ENCODE measurements at regions of chr1 and their contacts with region 1.

Region 1: DNA sequence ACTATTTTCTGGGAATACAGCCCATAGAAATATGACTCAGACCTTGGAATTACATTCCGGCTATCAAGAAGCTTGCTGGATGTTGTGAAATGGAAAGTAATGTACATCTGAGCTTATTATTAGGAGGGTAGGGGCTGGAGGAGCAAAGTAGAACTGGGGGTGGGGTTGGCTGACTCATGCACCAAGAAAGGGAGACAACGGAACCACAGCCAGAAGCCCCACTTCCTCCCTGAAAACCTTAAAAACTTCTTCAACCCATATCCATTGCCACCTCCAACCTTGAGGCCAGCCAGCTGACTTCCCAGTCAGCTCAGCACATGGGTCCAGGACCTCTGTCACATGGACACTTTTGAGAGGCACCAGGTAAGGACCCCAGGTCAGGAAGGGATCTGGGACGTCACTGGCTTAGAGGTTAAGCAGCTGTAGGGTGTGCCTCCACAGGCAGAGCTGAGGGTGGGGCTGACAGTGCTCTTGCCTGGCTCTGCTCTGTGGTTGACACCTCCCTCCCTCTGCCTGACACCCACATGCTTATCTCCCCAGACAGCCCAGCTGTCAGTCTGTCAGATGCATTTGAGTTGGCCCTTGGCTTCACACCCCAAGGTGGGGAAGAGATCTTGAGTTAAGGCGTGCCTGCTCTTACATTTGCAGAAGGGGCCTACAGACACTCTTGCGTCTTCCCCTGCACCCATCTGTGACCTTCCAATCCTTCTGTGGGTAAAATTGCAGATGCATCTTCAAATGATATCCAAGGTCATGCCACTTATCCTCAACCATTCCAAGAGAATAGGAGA is 5.7 kb upstream of the ZNF683 start:
- DNase-seq: peak; percentile 56 to 94 (median 76)
- ATAC-seq: peak; percentile 92
- H3K4me3 ChIP-seq: peak overlapping the region; percentile 22
- H3K4me3 Mint-ChIP-seq: peak overlapping the region; percentile 74
- H3K27ac ChIP-seq: peak overlapping the region; percentile 53 to 60
- H3K27ac Mint-ChIP-seq: peak overlapping the region; percentile 92
- H3K4me1 ChIP-seq: peaks cover 77% of the 10 kb centered on the region
- H3K4me1 Mint-ChIP-seq: peaks cover 72% of the 10 kb centered on the region
- H3K27me3 ChIP-seq: no peaks in the 10 kb centered on the region
- H3K27me3 Mint-ChIP-seq: no peaks in the 10 kb centered on the region
- CTCF ChIP-seq: no peak

Region 2: DNA sequence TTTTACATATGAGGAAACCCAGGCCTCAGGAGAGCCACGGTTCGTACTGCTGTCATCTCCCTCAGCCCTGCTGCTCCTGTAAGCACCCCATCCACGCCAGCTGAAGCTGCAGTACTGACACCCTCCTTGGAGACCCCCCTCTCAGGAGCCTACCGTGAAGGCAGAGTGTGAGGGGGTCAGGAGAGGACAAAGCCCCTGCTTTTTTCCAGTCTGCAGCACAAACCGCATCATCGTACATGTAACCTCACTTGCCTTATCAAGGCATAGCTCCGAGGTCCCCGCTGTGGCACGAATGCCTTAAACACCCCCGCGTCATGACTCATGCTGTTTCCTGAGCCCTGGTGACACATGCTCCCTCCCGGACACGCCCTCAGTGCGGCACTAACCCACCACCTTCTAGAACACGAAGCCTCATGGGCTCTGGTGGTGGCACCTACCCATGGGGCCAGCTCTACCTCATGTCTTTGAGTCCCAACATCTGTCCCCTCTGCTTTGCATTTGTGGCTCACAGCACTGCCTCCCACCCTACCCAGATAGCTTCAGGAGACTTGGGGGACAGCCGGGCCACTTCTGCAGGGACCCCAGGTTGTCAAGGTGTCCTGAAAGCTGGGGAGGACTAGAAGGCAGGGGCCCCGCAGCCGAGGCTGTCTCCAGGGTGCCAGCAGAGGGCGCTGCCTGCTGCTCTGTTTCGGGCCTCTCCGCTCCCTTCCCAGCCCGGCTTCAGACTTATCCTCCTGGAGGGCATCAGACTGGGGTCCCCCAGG is 93.5 kb before region 1 on chr1:
- CTCF ChIA-PET with region 1: interaction called, 16 read pairs
- POLR2A ChIA-PET with region 1: interaction called, 16 read pairs
- intact Hi-C with region 1: no loop called
- DNase-seq: peak; percentile 76 to 98 (median 94)
- ATAC-seq: peak; percentile 70
- H3K4me3 ChIP-seq: peak overlapping the region; percentile 44
- H3K4me3 Mint-ChIP-seq: peak overlapping the region; percentile 89
- H3K27ac ChIP-seq: peak overlapping the region; percentile 89 to 94
- H3K27ac Mint-ChIP-seq: peak overlapping the region; percentile 95
- H3K4me1 ChIP-seq: peaks cover 96% of the 10 kb centered on the region
- H3K4me1 Mint-ChIP-seq: peaks cover 92% of the 10 kb centered on the region
- H3K27me3 ChIP-seq: no peaks in the 10 kb centered on the region
- H3K27me3 Mint-ChIP-seq: no peaks in the 10 kb centered on the region
- CTCF ChIP-seq: peak; percentile 83

Region 3: GRCh38 chr1:26345718-26346549 is 32.3 kb before region 1 on chr1:
- CTCF ChIA-PET with region 1: no interaction called
- POLR2A ChIA-PET with region 1: no interaction called
- intact Hi-C with region 1: no loop called
- DNase-seq: no peak
- ATAC-seq: no peak
- H3K4me3 ChIP-seq: no peak overlapping the region
- H3K4me3 Mint-ChIP-seq: no peak overlapping the region
- H3K27ac ChIP-seq: no peak overlapping the region
- H3K27ac Mint-ChIP-seq: no peak overlapping the region
- H3K4me1 ChIP-seq: peaks cover 3% of the 10 kb centered on the region
- H3K4me1 Mint-ChIP-seq: no peaks in the 10 kb centered on the region
- H3K27me3 ChIP-seq: no peaks in the 10 kb centered on the region
- H3K27me3 Mint-ChIP-seq: no peaks in the 10 kb centered on the region
- CTCF ChIP-seq: no peak

Region 4: DNA sequence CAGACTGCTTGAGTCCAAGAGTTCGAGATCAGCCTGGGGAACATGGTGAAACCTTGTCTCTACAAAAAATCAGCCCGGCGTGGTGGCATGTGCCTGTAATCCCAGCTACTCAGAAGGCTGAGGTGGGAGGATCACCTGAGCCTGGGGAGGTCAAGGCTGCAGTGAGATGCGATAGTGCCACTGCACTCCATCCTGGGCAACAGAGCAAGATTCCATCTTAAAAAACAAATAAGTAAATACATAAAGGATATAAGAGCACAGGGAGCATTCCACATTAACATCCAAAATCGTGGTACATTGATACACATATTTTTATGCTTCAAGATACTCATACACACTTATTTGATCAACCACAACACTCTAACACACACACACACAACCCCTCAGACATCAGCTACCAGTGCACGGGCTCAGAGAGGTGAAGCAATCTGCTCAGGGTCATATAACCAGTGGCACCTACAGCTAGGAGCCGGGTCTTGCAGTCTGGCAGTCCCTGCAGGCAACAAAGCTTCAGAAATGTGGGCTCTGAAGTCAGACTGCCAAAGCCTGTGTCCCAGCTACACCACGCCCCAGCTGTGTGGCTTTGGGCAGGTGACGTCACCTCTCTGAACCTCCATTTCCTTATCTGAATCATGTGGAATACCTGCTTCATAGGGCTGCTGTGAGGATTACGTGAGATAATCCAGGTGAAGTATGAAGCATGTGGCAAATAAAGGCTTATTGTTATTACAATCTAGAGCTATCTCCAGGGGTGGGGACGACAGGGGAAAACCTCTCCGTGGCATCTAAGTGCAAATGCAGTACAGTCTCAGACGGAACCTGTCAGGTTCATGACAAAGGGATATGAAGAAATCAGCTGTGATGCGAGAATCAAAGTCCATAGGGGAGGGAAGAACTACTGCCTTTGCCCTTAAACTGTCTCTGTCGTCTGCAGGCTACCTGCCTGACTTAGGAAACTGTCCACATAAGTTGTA is 19.6 kb before region 1 on chr1:
- CTCF ChIA-PET with region 1: interaction called, 22 read pairs
- POLR2A ChIA-PET with region 1: interaction called, 34 read pairs
- intact Hi-C with region 1: loop called in 1 of 2 experiments (anchors 2 kb)
- DNase-seq: peak; percentile 52 to 93 (median 67)
- ATAC-seq: peak; percentile 89
- H3K4me3 ChIP-seq: peak overlapping the region; percentile 2
- H3K4me3 Mint-ChIP-seq: peak overlapping the region; percentile 52
- H3K27ac ChIP-seq: no peak overlapping the region
- H3K27ac Mint-ChIP-seq: peak overlapping the region; percentile 68
- H3K4me1 ChIP-seq: peaks cover 56% of the 10 kb centered on the region
- H3K4me1 Mint-ChIP-seq: peaks cover 42% of the 10 kb centered on the region
- H3K27me3 ChIP-seq: peaks cover 0 to 23% of the 10 kb centered on the region in 2 experiments
- H3K27me3 Mint-ChIP-seq: peaks cover 27% of the 10 kb centered on the region
- CTCF ChIP-seq: no peak

Region 5: DNA sequence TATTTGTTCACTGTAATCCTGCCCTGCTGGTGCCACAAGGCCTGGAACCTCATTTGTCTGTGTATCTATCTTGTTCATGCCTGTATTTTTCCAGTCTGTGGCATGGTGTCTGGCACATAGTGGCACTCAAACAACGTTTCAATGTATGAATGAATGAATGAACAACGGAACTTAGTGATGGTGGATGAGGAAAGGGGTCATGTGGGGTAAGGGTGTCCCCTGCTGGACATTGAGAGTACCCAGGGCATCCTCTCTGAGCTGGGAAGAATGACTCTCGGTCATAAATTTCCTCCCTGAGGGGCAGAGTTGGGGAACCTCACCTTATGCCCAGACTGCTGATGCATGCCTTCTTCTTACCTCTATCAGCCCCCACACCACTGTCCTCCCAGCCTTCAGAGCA is 13.2 kb after region 1 on chr1:
- CTCF ChIA-PET with region 1: interaction called, 12 read pairs
- POLR2A ChIA-PET with region 1: no interaction called
- intact Hi-C with region 1: no loop called
- DNase-seq: peak in 12 of 14 experiments; percentile 21 to 80 (median 36)
- ATAC-seq: peak; percentile 69
- H3K4me3 ChIP-seq: no peak overlapping the region
- H3K4me3 Mint-ChIP-seq: no peak overlapping the region
- H3K27ac ChIP-seq: no peak overlapping the region
- H3K27ac Mint-ChIP-seq: no peak overlapping the region
- H3K4me1 ChIP-seq: peaks cover 41% of the 10 kb centered on the region
- H3K4me1 Mint-ChIP-seq: peaks cover 20% of the 10 kb centered on the region
- H3K27me3 ChIP-seq: no peaks in the 10 kb centered on the region
- H3K27me3 Mint-ChIP-seq: no peaks in the 10 kb centered on the region
- CTCF ChIP-seq: peak; percentile 68

Region 6: DNA sequence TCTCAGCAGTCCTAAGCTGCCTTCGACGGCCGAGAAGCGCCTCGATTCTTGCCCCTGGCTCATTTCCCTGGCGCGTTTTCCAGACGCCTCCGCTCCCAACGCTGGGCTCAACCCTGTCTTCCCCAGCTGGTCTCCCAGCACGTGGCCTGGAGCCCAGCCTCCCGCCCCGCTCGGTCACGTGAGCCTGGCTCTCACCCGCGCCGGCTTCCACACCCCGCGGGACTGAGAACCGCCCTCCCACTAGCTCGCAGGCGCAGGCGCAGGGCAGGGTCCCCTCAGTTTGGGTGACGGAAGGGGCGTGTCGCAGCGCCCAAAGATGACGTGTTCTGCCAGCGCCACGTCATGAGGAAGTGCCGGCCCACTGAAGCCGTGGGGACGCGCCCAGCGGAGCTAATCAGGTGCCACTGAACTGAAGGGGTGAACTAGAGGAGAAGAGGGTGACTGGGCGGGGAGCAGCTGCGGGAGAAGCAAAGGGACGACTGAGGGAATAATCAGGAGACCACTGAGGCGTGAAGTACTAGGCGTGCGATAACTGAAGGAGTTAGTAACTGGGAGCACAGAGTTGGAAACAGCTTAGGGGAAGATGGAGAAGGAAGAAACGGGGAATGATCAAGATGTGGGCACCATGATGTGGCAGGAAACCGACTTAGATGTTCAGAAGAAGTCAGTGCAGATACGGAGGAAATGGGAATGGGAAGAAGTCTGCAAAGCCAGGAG is 53.9 kb after region 1 on chr1 and contains the start of gene DHDDS:
- CTCF ChIA-PET with region 1: no interaction called
- POLR2A ChIA-PET with region 1: interaction called, 22 read pairs
- intact Hi-C with region 1: no loop called
- DNase-seq: peak; percentile 95 to 99 (median 98)
- ATAC-seq: peak; percentile 94
- H3K4me3 ChIP-seq: peak within 1 kb of the TSS; percentile 81
- H3K4me3 Mint-ChIP-seq: peak within 1 kb of the TSS; percentile 92
- H3K27ac ChIP-seq: peak within 1 kb of the TSS; percentile 36 to 77
- H3K27ac Mint-ChIP-seq: peak within 1 kb of the TSS; percentile 88
- H3K4me1 ChIP-seq: peaks cover 26% of the 10 kb centered on the region
- H3K4me1 Mint-ChIP-seq: peaks cover 23% of the 10 kb centered on the region
- H3K27me3 ChIP-seq: no peaks in the 10 kb centered on the region
- H3K27me3 Mint-ChIP-seq: no peaks in the 10 kb centered on the region
- CTCF ChIP-seq: no peak
- total RNA-seq, gene DHDDS: 26.3 to 26.8 TPM

Region 7: GRCh38 chr1:26602378-26602959 is 224.2 kb after region 1 on chr1:
- CTCF ChIA-PET with region 1: no interaction called
- POLR2A ChIA-PET with region 1: no interaction called
- intact Hi-C with region 1: no loop called
- DNase-seq: peak in 10 of 14 experiments; percentile 4 to 83 (median 30)
- ATAC-seq: peak; percentile 79
- H3K4me3 ChIP-seq: no peak overlapping the region
- H3K4me3 Mint-ChIP-seq: no peak overlapping the region
- H3K27ac ChIP-seq: no peak overlapping the region
- H3K27ac Mint-ChIP-seq: no peak overlapping the region
- H3K4me1 ChIP-seq: no peaks in the 10 kb centered on the region
- H3K4me1 Mint-ChIP-seq: peaks cover 14% of the 10 kb centered on the region
- H3K27me3 ChIP-seq: no peaks in the 10 kb centered on the region
- H3K27me3 Mint-ChIP-seq: no peaks in the 10 kb centered on the region
- CTCF ChIP-seq: peak; percentile 97

Measured in CD4-positive, alpha-beta T cell (primary cell).